Activated CD8-positive, alpha-beta T cell treated with anti-CD3 and anti-CD28 coated beads for 36 hours (primary cell): ENCODE measurements at regions of chr19 and their contacts with region 1.

Region 1: GRCh38 chr19:8513687-8514504 is at the start of gene ZNF414:
- DNase-seq: peak; percentile 98
- ATAC-seq: peak; percentile 83
- H3K4me3 Mint-ChIP-seq: peak within 1 kb of the TSS; percentile 88
- H3K27ac Mint-ChIP-seq: peak within 1 kb of the TSS; percentile 99
- H3K4me1 Mint-ChIP-seq: peaks cover 41% of the 10 kb centered on the region
- H3K27me3 Mint-ChIP-seq: no peaks in the 10 kb centered on the region
- CTCF ChIP-seq: no peak
- total RNA-seq, gene ZNF414: 21.6 to 24.0 TPM

Region 2: GRCh38 chr19:8487137-8487851 is 26.6 kb before region 1 on chr19:
- CTCF ChIA-PET with region 1: no interaction called
- POLR2A ChIA-PET with region 1: interaction called, 15 read pairs
- intact Hi-C with region 1: no loop called
- DNase-seq: peak; percentile 81
- ATAC-seq: peak; percentile 83
- H3K4me3 Mint-ChIP-seq: peak overlapping the region; percentile 12
- H3K27ac Mint-ChIP-seq: peak overlapping the region; percentile 93
- H3K4me1 Mint-ChIP-seq: peaks cover 40% of the 10 kb centered on the region
- H3K27me3 Mint-ChIP-seq: no peaks in the 10 kb centered on the region
- CTCF ChIP-seq: no peak

Region 3: DNA sequence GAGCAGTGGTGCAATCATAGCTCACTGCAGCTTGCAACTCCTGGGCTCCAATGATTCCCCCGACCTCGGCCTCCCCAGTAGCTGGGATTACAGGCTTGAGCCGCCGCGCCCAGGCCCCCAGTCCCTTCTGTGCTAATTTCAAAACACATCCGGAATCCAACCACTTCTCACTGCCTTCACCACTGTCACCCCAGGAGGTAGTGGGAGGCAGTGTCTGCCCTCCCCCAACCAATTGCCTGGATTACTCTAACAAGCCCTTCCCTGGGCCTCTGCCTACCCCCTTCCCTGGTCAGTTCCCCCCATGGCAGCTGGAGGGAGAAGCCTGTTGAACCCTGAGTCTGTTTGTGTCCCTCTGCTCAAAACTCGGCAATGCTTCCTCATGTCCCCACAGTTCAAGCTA is 13.7 kb before region 1 on chr19:
- CTCF ChIA-PET with region 1: interaction called, 7 read pairs
- POLR2A ChIA-PET with region 1: interaction called, 12 read pairs
- intact Hi-C with region 1: no loop called
- DNase-seq: no peak
- ATAC-seq: no peak
- H3K4me3 Mint-ChIP-seq: no peak overlapping the region
- H3K27ac Mint-ChIP-seq: peak overlapping the region; percentile 31
- H3K4me1 Mint-ChIP-seq: peaks cover 17% of the 10 kb centered on the region
- H3K27me3 Mint-ChIP-seq: no peaks in the 10 kb centered on the region
- CTCF ChIP-seq: no peak

Region 4: DNA sequence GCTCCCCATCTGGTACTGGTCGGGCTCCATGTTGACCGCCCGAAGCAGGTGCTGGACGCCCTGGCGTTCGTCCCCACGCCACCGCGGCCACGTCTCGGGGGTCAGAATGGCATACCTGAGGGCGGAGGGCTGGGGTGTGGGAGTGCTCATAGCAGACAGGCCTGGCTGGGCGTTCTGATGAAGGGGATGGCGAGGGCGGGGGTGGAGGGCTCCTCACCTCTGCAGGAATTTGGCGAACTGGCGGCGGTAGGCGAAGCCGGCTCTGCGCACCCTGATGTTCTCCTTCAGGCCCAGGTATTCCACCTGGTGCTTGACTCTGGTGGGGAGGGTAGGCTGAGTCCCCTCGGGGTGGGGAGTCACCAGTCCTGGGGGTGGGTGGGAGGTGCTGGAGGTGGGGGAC is 22.4 kb after region 1 on chr19:
- CTCF ChIA-PET with region 1: no interaction called
- POLR2A ChIA-PET with region 1: no interaction called
- intact Hi-C with region 1: no loop called
- DNase-seq: no peak
- ATAC-seq: no peak
- H3K4me3 Mint-ChIP-seq: no peak overlapping the region
- H3K27ac Mint-ChIP-seq: no peak overlapping the region
- H3K4me1 Mint-ChIP-seq: no peaks in the 10 kb centered on the region
- H3K27me3 Mint-ChIP-seq: no peaks in the 10 kb centered on the region
- CTCF ChIP-seq: no peak

Region 5: GRCh38 chr19:8569066-8569771 is 55.3 kb after region 1 on chr19:
- CTCF ChIA-PET with region 1: interaction called, 9 read pairs
- POLR2A ChIA-PET with region 1: interaction called, 12 read pairs
- intact Hi-C with region 1: no loop called
- DNase-seq: peak; percentile 88
- ATAC-seq: peak; percentile 86
- H3K4me3 Mint-ChIP-seq: peak overlapping the region; percentile 60
- H3K27ac Mint-ChIP-seq: peak overlapping the region; percentile 96
- H3K4me1 Mint-ChIP-seq: peaks cover 54% of the 10 kb centered on the region
- H3K27me3 Mint-ChIP-seq: no peaks in the 10 kb centered on the region
- CTCF ChIP-seq: no peak